Gastrocnemius medialis (tissue), 4 donors: ENCODE measurements at regions of chr9 and their contacts with region 1.

Region 1: GRCh38 chr9:100322954-100323536 is 29.7 kb downstream of the TEX10 start:
- DNase-seq: no peak
- ATAC-seq: no peak
- H3K4me3 ChIP-seq: no peak overlapping the region
- H3K27ac ChIP-seq: no peak overlapping the region
- H3K4me1 ChIP-seq: no peaks in the 10 kb centered on the region
- H3K27me3 ChIP-seq: no peaks in the 10 kb centered on the region
- CTCF ChIP-seq: peak in 4 of 5 experiments; percentile 24 to 69 (median 49)
- POLR2A ChIP-seq: no peak

Region 2: GRCh38 chr9:99184475-99185347 is 1138.3 kb before region 1 on chr9:
- in situ Hi-C with region 1: loop called (anchors 25 kb)
- intact Hi-C with region 1: loop called (anchors 5 kb)
- DNase-seq: peak; percentile 70 to 86
- ATAC-seq: peak; percentile 94 to 97
- H3K4me3 ChIP-seq: peak overlapping the region; percentile 3 to 48 (median 40)
- H3K27ac ChIP-seq: peak overlapping the region in 2 of 4 donors; percentile 12 to 30
- H3K4me1 ChIP-seq: peaks cover 0 to 7% of the 10 kb centered on the region in 2 donors
- H3K27me3 ChIP-seq: no peaks in the 10 kb centered on the region
- CTCF ChIP-seq: peak; percentile 90 to 97 (median 92)
- POLR2A ChIP-seq: no peak